ENCODE measurements at regions of chr9 and their contacts with region 1.

Region 1: GRCh38 chr9:9389904-9390303 is 1222.9 kb downstream of the PTPRD start:
- DNase-seq: no peak
- ATAC-seq: no peak

Region 2: GRCh38 chr9:8724284-8725018 is 665.5 kb before region 1 on chr9:
- intact Hi-C with region 1: loop called (anchors 5 kb)
- DNase-seq: no peak
- ATAC-seq: peak; percentile 56

Region 3: GRCh38 chr9:9099646-9100045 is 290.3 kb before region 1 on chr9:
- intact Hi-C with region 1: no loop called
- DNase-seq: no peak
- ATAC-seq: no peak

Measured in sciatic nerve (tissue), 2 donors.